ENCODE measurements at regions of chr15 and their contacts with region 1.

Region 1: GRCh38 chr15:51649659-51650521 is 27.3 kb upstream of the DMXL2 start:
- DNase-seq: peak; percentile 65 to 72 (median 68)
- H3K4me3 ChIP-seq: no peak overlapping the region
- H3K4me3 Mint-ChIP-seq: no peak overlapping the region
- H3K27ac ChIP-seq: no peak overlapping the region
- H3K27ac Mint-ChIP-seq: no peak overlapping the region
- H3K4me1 ChIP-seq: no peaks in the 10 kb centered on the region
- H3K4me1 Mint-ChIP-seq: no peaks in the 10 kb centered on the region
- H3K27me3 ChIP-seq: no peaks in the 10 kb centered on the region
- H3K27me3 Mint-ChIP-seq: no peaks in the 10 kb centered on the region

Region 2: GRCh38 chr15:51708013-51708412 is 58.1 kb after region 1 on chr15:
- CTCF ChIA-PET with region 1: no interaction called
- POLR2A ChIA-PET with region 1: no interaction called
- intact Hi-C with region 1: no loop called
- DNase-seq: no peak
- H3K4me3 ChIP-seq: no peak overlapping the region
- H3K4me3 Mint-ChIP-seq: no peak overlapping the region
- H3K27ac ChIP-seq: no peak overlapping the region
- H3K27ac Mint-ChIP-seq: no peak overlapping the region
- H3K4me1 ChIP-seq: no peaks in the 10 kb centered on the region
- H3K4me1 Mint-ChIP-seq: no peaks in the 10 kb centered on the region
- H3K27me3 ChIP-seq: no peaks in the 10 kb centered on the region
- H3K27me3 Mint-ChIP-seq: peaks cover 2 to 4% of the 10 kb centered on the region in 2 donors

Region 3: DNA sequence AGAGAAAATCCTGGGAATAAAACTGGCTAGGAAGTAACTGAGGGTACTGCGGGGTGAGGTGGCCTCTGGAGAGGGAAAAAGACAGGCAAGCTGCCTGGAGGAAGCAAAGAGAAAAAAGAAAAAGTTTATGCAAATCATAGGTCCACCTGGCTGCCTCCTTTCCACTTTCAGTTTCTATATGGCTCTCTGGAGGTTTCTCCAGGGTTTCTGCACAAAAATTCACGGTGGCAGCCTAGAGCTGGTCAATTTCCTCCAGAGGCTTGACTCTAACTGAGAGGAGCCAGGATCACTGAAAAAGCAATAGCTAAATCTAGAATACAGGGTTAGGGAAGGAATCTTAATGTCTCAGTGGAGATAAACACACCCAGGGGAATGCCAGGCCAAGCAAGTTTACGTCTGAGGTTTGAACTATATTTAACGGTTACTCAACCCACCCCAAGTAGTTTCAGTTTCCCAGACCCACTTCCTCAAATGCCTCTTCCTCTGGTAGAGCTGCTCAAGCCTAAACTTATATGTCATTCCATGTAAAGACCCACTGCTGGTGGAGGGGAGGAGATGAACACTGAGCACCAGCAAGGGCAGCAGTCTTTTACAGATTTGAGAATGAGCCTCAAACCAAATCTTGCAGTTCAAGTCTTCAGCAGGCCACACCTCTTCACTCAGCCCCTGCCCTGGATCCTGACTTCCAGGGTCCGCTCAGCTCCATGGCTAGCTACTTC is 81.8 kb after region 1 on chr15:
- CTCF ChIA-PET with region 1: interaction called, 25 read pairs
- POLR2A ChIA-PET with region 1: interaction called, 7 read pairs
- intact Hi-C with region 1: loop called (anchors 1 kb)
- DNase-seq: peak; percentile 51 to 74 (median 61)
- H3K4me3 ChIP-seq: peak overlapping the region; percentile 15 to 57
- H3K4me3 Mint-ChIP-seq: peak overlapping the region; percentile 85 to 95 (median 88)
- H3K27ac ChIP-seq: peak overlapping the region; percentile 78
- H3K27ac Mint-ChIP-seq: peak overlapping the region; percentile 95 to 98 (median 97)
- H3K4me1 ChIP-seq: peaks cover 87% of the 10 kb centered on the region
- H3K4me1 Mint-ChIP-seq: peaks cover 60 to 96% (median 79%) of the 10 kb centered on the region in 4 donors
- H3K27me3 ChIP-seq: no peaks in the 10 kb centered on the region
- H3K27me3 Mint-ChIP-seq: no peaks in the 10 kb centered on the region

Region 4: DNA sequence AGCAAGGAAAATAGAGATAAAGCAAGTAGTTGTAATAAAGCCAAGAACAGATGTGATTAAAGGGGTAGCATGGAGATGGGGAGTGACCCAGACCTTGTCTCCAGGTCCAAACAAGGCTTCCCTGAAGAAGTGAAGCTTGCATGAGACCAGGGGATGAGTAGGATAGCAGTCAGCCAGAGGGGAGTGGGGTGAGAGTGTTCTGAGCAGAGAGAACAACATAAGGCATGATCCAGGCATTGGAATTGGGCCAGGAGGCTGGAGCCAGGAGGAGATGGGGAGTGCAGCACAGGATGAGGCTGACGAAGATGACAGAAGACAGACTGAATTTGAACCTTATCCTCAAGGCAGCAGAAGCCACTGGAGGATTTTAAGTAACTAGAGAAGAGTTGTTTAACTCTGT is 108.8 kb after region 1 on chr15:
- CTCF ChIA-PET with region 1: interaction called, 13 read pairs
- POLR2A ChIA-PET with region 1: no interaction called
- intact Hi-C with region 1: no loop called
- DNase-seq: no peak
- H3K4me3 ChIP-seq: no peak overlapping the region
- H3K4me3 Mint-ChIP-seq: no peak overlapping the region
- H3K27ac ChIP-seq: no peak overlapping the region
- H3K27ac Mint-ChIP-seq: peak overlapping the region in 1 of 7 donors; percentile 40
- H3K4me1 ChIP-seq: peaks cover 8% of the 10 kb centered on the region
- H3K4me1 Mint-ChIP-seq: peaks cover 11 to 23% (median 15%) of the 10 kb centered on the region in 4 donors
- H3K27me3 ChIP-seq: no peaks in the 10 kb centered on the region
- H3K27me3 Mint-ChIP-seq: no peaks in the 10 kb centered on the region

Region 5: DNA sequence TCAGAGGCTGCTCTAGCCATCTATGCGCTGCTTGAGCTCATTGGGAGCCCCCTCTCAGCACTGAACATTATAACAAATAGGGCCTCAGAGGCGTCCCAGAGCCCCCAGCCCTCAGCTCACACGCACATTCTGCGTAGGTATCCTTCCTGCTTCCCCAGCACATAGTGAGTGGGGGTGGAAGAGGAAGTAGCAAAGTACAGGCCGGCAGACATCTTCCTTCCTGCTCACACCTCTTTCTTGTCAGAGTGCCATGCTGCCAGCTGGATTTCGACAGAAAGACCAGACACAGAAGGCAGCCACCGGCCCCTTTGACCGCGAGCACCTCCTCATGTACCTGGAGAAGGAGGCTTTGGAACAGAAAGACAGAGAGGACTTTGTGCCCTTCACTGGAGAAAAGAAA is 118.1 kb after region 1 on chr15:
- CTCF ChIA-PET with region 1: interaction called, 24 read pairs
- POLR2A ChIA-PET with region 1: no interaction called
- intact Hi-C with region 1: no loop called
- DNase-seq: peak in 3 of 5 donors; percentile 3 to 15 (median 6)
- H3K4me3 ChIP-seq: no peak overlapping the region
- H3K4me3 Mint-ChIP-seq: peak overlapping the region in 3 of 8 donors; percentile 11 to 45 (median 13)
- H3K27ac ChIP-seq: no peak overlapping the region
- H3K27ac Mint-ChIP-seq: peak overlapping the region in 4 of 7 donors; percentile 63 to 93 (median 80)
- H3K4me1 ChIP-seq: peaks cover 9% of the 10 kb centered on the region
- H3K4me1 Mint-ChIP-seq: peaks cover 11 to 23% (median 14%) of the 10 kb centered on the region in 4 donors
- H3K27me3 ChIP-seq: no peaks in the 10 kb centered on the region
- H3K27me3 Mint-ChIP-seq: no peaks in the 10 kb centered on the region

Region 6: DNA sequence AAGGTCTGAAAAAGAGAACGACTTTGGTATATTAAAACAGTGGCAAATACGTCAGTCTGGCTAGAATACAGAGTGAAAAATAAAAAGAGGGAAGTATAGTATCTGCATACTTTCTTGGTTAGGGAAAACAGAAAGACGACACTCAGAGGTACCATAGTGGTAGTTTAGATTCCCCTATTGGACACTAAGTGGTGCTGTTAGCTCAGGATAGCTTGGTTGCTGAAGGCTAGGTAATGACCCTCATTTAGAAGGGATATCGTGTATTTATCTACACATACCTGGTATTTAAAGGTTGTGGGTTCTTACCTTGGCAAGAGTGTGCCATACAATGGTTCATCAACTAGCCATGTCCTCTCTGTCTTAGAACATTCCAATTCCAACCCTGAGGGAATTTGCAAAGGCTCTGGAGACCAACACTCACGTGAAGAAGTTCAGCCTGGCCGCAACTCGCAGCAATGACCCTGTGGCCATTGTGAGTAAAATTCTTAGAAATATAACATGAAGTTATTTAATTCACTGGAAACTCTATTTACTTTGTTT is 132.5 kb after region 1 on chr15:
- CTCF ChIA-PET with region 1: interaction called, 283 read pairs
- POLR2A ChIA-PET with region 1: interaction called, 23 read pairs
- intact Hi-C with region 1: no loop called
- DNase-seq: no peak
- H3K4me3 ChIP-seq: no peak overlapping the region
- H3K4me3 Mint-ChIP-seq: no peak overlapping the region
- H3K27ac ChIP-seq: no peak overlapping the region
- H3K27ac Mint-ChIP-seq: no peak overlapping the region
- H3K4me1 ChIP-seq: no peaks in the 10 kb centered on the region
- H3K4me1 Mint-ChIP-seq: peaks cover 0 to 4% (median 0%) of the 10 kb centered on the region in 4 donors
- H3K27me3 ChIP-seq: no peaks in the 10 kb centered on the region
- H3K27me3 Mint-ChIP-seq: no peaks in the 10 kb centered on the region

Region 7: DNA sequence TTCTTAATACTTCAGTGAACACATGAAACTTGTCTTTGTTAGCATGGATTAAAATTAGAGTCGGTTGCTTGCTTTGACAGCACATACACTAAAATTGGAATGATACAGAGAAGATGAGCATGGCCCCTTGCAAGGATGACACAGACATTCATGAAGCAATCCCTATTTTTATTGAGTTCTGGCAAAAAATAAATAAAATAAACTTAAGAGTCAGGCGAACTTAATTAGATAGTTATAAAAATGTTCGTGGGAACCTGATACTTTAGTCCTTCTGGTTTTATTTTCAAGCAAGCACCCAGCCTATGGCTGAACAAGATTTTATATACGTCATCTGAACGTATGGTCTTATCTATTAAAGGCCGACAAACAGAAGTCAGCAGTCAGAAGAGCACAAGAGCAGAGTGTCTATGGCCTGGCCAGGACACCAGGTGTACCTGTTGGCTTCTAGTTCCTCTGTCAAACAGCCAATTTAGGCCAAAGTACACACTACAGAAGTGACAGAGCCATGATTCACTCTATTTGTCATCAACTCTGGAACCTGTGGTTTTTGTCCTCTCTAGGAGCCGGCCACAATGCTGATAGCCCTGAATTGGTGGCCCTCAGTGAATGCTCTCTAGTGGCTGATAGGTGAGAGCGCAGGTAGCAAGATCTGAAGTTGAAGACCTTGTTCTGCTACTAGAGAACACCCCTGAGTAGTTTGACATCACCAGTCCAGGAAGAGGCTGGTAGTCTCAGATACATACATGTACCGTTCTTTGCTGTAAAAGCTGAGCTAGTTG is 257.4 kb after region 1 on chr15:
- CTCF ChIA-PET with region 1: interaction called, 9 read pairs
- POLR2A ChIA-PET with region 1: no interaction called
- intact Hi-C with region 1: loop called (anchors 10 kb)
- DNase-seq: no peak
- H3K4me3 ChIP-seq: no peak overlapping the region
- H3K4me3 Mint-ChIP-seq: no peak overlapping the region
- H3K27ac ChIP-seq: no peak overlapping the region
- H3K27ac Mint-ChIP-seq: no peak overlapping the region
- H3K4me1 ChIP-seq: no peaks in the 10 kb centered on the region
- H3K4me1 Mint-ChIP-seq: peaks cover 0 to 4% (median 1%) of the 10 kb centered on the region in 4 donors
- H3K27me3 ChIP-seq: no peaks in the 10 kb centered on the region
- H3K27me3 Mint-ChIP-seq: no peaks in the 10 kb centered on the region

Measured in CD4-positive, alpha-beta memory T cell (primary cell).